GM18951 (cell line): ENCODE measurements at regions of chr18 and their contacts with region 1.

Region 1: DNA sequence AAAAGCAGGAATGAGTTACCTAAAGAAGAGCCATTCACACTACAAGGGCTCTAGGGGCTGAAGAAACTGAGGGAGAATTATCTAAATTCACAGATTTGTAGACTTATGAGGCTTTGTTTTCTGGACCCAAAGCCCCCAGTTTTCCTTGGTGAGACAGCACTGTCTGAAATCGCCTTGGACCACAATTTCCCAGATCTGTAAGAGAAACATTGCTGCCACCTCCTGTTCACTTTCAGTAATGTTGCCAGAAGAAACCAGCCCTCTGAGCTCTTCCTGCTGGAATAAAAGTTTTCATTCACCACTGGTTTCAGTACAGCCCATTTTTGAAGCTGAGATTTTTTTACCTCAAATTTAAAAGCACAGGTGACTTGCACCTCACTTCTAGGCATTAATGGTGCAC is 169.2 kb downstream of the CDH20 start:
- POLR2A ChIP-seq: no peak

Region 2: GRCh38 chr18:61322265-61322873 is 180.1 kb before region 1 on chr18:
- in situ Hi-C with region 1: loop called (anchors 10 kb)
- POLR2A ChIP-seq: no peak

Region 3: DNA sequence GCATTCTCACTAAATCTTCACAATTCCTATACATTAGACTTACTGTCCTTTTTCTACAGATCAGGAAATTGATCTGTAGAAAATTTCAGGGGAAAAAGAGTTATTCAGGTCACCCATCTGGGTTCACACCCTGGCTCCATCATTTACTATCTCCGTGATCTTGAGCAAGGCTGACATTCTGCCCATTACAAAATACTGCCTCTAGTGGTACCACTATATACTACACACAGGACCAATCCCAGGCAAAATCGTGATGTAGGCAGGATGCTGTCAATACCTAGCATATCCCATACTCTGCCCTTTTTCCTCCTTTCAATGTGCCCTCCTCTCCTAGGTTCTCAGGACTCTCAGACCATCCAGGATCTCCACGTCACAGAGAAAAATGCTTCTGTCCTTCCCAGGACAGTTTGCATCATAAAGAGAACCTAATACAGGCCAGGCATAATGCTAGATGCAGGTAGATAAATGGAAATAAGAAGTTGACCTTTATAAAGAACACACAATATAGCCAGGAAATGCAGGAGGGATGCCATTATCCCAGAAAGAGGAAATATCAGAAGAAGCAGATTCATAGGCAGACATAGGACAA is 67.3 kb before region 1 on chr18:
- in situ Hi-C with region 1: no loop called
- POLR2A ChIP-seq: no peak